Panc1 (cell line): ENCODE measurements at regions of chr17 and their contacts with region 1.

Region 1: DNA sequence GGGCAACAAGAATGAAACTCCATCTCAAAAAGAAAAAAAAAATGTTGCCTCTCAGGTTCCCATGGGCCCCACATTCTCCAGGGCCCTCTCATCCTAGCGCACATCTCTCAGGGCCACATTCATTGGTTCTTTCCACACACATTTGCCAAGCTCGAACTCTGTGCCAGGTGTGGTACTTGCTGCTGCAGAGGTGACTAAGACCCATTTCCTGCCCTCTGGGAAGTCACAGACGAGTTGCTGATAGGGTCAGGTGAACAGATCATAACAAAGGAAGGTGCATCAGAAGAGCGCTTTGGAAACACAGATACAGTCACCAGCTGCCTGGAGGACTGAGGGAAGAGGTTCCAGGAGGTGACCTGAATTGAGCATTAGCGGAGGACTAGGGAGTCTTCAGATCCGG is 1.0 kb downstream of the GSDMA start:
- DNase-seq: no peak
- ATAC-seq: no peak
- H3K4me3 ChIP-seq: no peak overlapping the region
- H3K27ac ChIP-seq: no peak overlapping the region
- H3K4me1 ChIP-seq: no peaks in the 10 kb centered on the region
- H3K27me3 ChIP-seq: no peaks in the 10 kb centered on the region
- CTCF ChIP-seq: no peak

Region 2: GRCh38 chr17:39939588-39940419 is 24.0 kb before region 1 on chr17:
- CTCF ChIA-PET with region 1: no interaction called
- POLR2A ChIA-PET with region 1: interaction called, 13 read pairs
- in situ Hi-C with region 1: no loop called
- intact Hi-C with region 1: no loop called
- DNase-seq: no peak
- ATAC-seq: peak; percentile 54
- H3K4me3 ChIP-seq: no peak overlapping the region
- H3K27ac ChIP-seq: no peak overlapping the region
- H3K4me1 ChIP-seq: no peaks in the 10 kb centered on the region
- H3K27me3 ChIP-seq: no peaks in the 10 kb centered on the region
- CTCF ChIP-seq: no peak

Region 3: GRCh38 chr17:40251576-40251975 is 287.7 kb after region 1 on chr17:
- CTCF ChIA-PET with region 1: no interaction called
- POLR2A ChIA-PET with region 1: interaction called, 11 read pairs
- in situ Hi-C with region 1: no loop called
- intact Hi-C with region 1: no loop called
- DNase-seq: peak; percentile 30
- ATAC-seq: peak; percentile 82
- H3K4me3 ChIP-seq: no peak overlapping the region
- H3K27ac ChIP-seq: no peak overlapping the region
- H3K4me1 ChIP-seq: peaks cover 8% of the 10 kb centered on the region
- H3K27me3 ChIP-seq: no peaks in the 10 kb centered on the region
- CTCF ChIP-seq: no peak